Activated CD8-positive, alpha-beta T cell treated with anti-CD3 and anti-CD28 coated beads, Interleukin-2, amount 10 ng/mL, durations not matched to agents 7 days and 5 days (primary cell): ENCODE measurements at regions of chr11 and their contacts with region 1.

Region 1: DNA sequence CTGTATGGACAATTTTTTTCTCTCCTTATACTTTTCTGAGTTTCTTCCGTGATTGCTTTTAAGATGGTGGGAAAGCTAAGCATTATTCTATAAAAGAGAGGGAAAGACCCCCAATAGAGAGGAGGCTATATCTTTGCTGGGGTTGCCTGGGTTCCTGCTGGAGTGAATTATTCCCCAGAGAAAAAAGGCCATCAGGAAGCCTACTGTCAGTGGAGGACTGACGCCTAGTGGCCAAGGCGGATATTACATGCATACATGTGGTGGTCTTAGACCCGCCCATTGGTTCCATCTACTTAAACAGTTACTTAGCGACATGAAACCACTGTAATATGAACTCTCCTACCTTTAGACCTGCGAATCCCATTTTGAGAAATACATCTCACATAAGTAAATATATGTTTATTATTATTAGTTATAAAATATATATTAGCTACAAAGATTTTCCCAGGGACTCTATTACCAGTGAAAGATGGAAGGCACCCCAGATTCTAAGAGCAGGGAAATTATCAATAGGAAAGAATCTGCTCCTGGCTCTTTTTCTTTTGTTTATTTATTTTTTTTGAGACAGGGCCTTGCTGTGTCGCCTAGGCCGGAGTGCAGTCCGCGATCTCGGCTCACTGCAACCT is 15.7 kb upstream of the PGA3 start:
- DNase-seq: peak; percentile 87
- ATAC-seq: peak; percentile 87
- H3K4me3 Mint-ChIP-seq: no peak overlapping the region
- H3K27ac Mint-ChIP-seq: no peak overlapping the region
- H3K4me1 Mint-ChIP-seq: peaks cover 3% of the 10 kb centered on the region
- H3K27me3 Mint-ChIP-seq: peaks cover 4% of the 10 kb centered on the region

Region 2: GRCh38 chr11:61129639-61130523 is 57.7 kb before region 1 on chr11:
- CTCF ChIA-PET with region 1: interaction called, 41 read pairs
- POLR2A ChIA-PET with region 1: no interaction called
- DNase-seq: peak; percentile 94
- ATAC-seq: peak; percentile 94
- H3K4me3 Mint-ChIP-seq: peak overlapping the region; percentile 32
- H3K27ac Mint-ChIP-seq: peak overlapping the region; percentile 47
- H3K4me1 Mint-ChIP-seq: peaks cover 23% of the 10 kb centered on the region
- H3K27me3 Mint-ChIP-seq: no peaks in the 10 kb centered on the region

Region 3: GRCh38 chr11:61174949-61175348 is 12.7 kb before region 1 on chr11:
- CTCF ChIA-PET with region 1: interaction called, 11 read pairs
- POLR2A ChIA-PET with region 1: no interaction called
- DNase-seq: no peak
- ATAC-seq: no peak
- H3K4me3 Mint-ChIP-seq: no peak overlapping the region
- H3K27ac Mint-ChIP-seq: no peak overlapping the region
- H3K4me1 Mint-ChIP-seq: peaks cover 10% of the 10 kb centered on the region
- H3K27me3 Mint-ChIP-seq: peaks cover 20% of the 10 kb centered on the region